CD8-positive, alpha-beta T cell (primary cell): ENCODE measurements at regions of chr5 and their contacts with region 1.

Region 1: GRCh38 chr5:96687812-96688453 is 25.8 kb downstream of the CAST start:
- DNase-seq: peak in 2 of 9 experiments; percentile 42 to 61
- ATAC-seq: peak; percentile 75
- H3K4me3 ChIP-seq: no peak overlapping the region
- H3K4me3 Mint-ChIP-seq: no peak overlapping the region
- H3K27ac ChIP-seq: no peak overlapping the region
- H3K27ac Mint-ChIP-seq: no peak overlapping the region
- H3K4me1 ChIP-seq: no peaks in the 10 kb centered on the region
- H3K4me1 Mint-ChIP-seq: peaks cover 19% of the 10 kb centered on the region
- H3K27me3 ChIP-seq: no peaks in the 10 kb centered on the region
- H3K27me3 Mint-ChIP-seq: no peaks in the 10 kb centered on the region
- CTCF ChIP-seq: no peak

Region 2: DNA sequence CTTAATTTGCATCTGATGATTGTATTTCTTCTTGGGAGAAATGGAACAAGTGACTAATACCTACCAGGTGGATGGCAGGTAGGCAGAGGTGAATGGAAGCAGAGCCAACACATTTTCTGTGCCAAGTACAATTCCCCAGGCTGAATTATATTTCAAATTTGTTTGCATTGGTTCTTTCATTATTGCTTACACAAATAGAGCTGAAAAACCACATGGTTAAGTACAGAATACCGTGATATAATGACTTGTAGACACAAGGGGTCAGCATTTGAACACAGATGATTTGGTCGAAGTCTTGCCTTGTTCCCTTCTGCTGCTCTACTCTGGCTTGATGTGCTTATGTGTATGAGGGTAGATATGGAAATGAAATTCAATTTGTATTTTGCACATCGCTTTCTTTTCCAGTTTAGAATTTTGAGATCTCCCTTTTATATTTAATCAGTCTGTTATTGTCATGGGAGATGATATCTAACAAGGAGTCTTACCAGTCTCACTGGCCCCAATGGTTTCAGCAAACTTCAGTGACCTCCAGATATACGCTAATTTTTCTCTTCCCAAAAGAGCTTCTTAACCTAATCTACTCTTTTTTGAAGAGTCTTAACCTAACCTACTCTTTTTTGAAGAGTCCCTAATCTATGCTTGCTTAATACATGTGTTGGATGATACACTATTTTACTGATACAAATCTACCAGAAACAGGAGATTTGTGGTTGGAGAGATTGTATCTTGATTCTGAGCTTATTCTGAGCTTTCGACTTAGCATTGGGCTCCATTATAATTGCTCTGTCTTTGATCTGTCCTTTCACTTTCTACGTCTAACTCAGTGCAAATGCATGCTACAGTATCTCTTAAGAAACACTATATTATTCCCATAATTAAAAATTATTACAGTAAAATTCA is 343.0 kb before region 1 on chr5:
- CTCF ChIA-PET with region 1: interaction called, 6 read pairs
- POLR2A ChIA-PET with region 1: no interaction called
- intact Hi-C with region 1: loop called (anchors 10 kb)
- DNase-seq: peak in 3 of 9 experiments; percentile 8 to 75 (median 70)
- ATAC-seq: peak; percentile 89
- H3K4me3 ChIP-seq: no peak overlapping the region
- H3K4me3 Mint-ChIP-seq: peak overlapping the region; percentile 2
- H3K27ac ChIP-seq: no peak overlapping the region
- H3K27ac Mint-ChIP-seq: no peak overlapping the region
- H3K4me1 ChIP-seq: peaks cover 12% of the 10 kb centered on the region
- H3K4me1 Mint-ChIP-seq: peaks cover 13% of the 10 kb centered on the region
- H3K27me3 ChIP-seq: peaks cover 0 to 2% of the 10 kb centered on the region in 2 experiments
- H3K27me3 Mint-ChIP-seq: peaks cover 4% of the 10 kb centered on the region
- CTCF ChIP-seq: peak; percentile 26

Region 3: DNA sequence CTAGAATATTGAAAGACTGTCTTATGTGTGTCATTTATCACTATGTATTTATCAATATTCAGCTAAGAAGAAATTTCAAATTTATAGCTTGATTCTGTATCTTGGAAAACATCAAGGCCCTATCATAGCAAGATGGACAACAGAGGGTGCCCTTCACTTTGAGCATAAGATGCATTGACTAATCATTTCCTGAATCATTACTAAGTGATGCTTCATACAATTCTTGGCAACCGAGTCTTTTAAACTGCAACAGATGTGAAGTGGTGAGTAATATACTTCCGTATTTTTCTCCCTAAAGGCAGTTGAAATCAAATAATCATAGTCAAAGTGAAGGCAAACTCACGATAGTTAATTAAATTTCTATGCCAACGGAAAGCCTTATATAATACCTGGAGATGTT is 1767.0 kb after region 1 on chr5:
- CTCF ChIA-PET with region 1: no interaction called
- POLR2A ChIA-PET with region 1: no interaction called
- intact Hi-C with region 1: no loop called
- DNase-seq: no peak
- ATAC-seq: no peak
- H3K4me3 ChIP-seq: no peak overlapping the region
- H3K4me3 Mint-ChIP-seq: no peak overlapping the region
- H3K27ac ChIP-seq: no peak overlapping the region
- H3K27ac Mint-ChIP-seq: no peak overlapping the region
- H3K4me1 ChIP-seq: no peaks in the 10 kb centered on the region
- H3K4me1 Mint-ChIP-seq: no peaks in the 10 kb centered on the region
- H3K27me3 ChIP-seq: no peaks in the 10 kb centered on the region
- H3K27me3 Mint-ChIP-seq: no peaks in the 10 kb centered on the region
- CTCF ChIP-seq: no peak